Lower leg skin (tissue), 4 donors: ENCODE measurements at regions of chr16 and their contacts with region 1.

Region 1: GRCh38 chr16:57863434-57864160 is 61.3 kb upstream of the KIFC3 start:
- DNase-seq: peak; percentile 64 to 88
- H3K4me3 ChIP-seq: no peak overlapping the region
- CTCF ChIP-seq: no peak
- POLR2A ChIP-seq: no peak

Region 2: GRCh38 chr16:57576429-57576870 is 287.1 kb before region 1 on chr16:
- intact Hi-C with region 1: loop called (anchors 10 kb)
- DNase-seq: peak; percentile 72 to 95
- H3K4me3 ChIP-seq: no peak overlapping the region
- CTCF ChIP-seq: peak in 2 of 3 donors; percentile 6 to 87
- POLR2A ChIP-seq: no peak

Region 3: GRCh38 chr16:57757326-57757786 is 106.2 kb before region 1 on chr16:
- intact Hi-C with region 1: loop called (anchors 10 kb)
- DNase-seq: peak; percentile 83 to 98
- H3K4me3 ChIP-seq: no peak overlapping the region
- CTCF ChIP-seq: peak in 1 of 3 donors; percentile 83
- POLR2A ChIP-seq: no peak

Region 4: DNA sequence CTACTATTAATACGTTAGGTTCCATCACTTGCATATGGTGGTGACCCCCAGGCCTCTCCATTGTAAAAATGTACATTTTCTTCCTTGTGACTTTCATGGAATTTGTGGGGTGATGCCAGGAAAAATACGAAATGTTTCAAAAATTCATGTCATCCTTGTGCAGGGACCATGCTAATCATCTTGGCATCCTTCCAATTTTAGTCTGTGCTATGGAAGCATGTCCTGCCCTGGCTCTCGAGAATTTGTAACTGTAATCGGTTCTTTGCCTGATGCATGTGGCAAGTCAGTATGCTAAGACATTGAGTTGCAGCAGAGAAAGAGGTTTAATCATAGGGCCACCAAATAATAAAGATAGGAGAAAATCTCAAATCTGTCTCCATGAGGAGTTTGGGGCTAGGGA is 514.3 kb after region 1 on chr16:
- intact Hi-C with region 1: no loop called
- DNase-seq: no peak
- H3K4me3 ChIP-seq: no peak overlapping the region
- CTCF ChIP-seq: no peak
- POLR2A ChIP-seq: no peak